ENCODE measurements at regions of chr19 and their contacts with region 1.

Region 1: DNA sequence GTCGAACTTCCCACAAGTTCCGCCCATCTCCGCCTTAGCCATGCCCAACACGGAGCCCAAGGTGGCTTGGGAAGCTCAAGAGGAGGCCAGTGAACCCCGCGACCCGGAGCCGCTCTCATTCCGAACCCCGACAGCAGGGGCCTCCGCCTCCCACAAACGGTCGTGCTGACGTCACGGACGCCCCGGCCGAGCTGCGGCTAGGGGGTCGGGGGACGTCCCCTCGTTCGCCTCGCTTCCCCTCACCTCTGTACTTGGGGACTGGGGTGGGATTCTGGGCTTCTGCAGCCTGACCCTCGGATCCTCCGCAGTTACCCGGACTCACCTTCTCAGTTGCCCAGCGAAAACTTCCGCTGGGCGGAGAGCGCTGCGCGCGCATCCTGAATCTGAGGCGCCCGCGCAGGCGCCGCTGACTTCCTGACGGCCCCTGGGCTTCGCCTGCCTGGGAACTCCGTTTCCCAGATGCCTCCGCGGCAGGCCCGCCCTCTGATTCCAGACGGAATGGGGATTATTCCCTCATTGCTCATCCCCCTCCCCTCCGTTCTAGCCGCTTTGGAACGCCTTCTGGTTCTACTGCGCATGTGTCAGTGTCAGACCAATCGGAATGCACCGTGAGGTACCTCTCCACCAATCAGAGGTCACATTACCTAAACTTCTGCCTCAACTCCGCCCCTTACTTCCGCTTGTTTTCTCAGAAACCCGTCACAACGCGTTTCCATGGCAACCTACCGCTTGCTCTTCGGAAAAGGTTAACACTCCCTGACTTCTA is at the start of gene VRK3:
- DNase-seq: peak; percentile 100
- ATAC-seq: peak; percentile 91
- H3K4me3 ChIP-seq: peak within 1 kb of the TSS; percentile 95
- H3K27ac ChIP-seq: peak within 1 kb of the TSS; percentile 62
- H3K4me1 ChIP-seq: peaks cover 41% of the 10 kb centered on the region
- H3K27me3 ChIP-seq: no peaks in the 10 kb centered on the region
- CTCF ChIP-seq: no peak
- total RNA-seq, gene VRK3: 26.0 and 36.3 TPM in 2 replicates

Region 2: DNA sequence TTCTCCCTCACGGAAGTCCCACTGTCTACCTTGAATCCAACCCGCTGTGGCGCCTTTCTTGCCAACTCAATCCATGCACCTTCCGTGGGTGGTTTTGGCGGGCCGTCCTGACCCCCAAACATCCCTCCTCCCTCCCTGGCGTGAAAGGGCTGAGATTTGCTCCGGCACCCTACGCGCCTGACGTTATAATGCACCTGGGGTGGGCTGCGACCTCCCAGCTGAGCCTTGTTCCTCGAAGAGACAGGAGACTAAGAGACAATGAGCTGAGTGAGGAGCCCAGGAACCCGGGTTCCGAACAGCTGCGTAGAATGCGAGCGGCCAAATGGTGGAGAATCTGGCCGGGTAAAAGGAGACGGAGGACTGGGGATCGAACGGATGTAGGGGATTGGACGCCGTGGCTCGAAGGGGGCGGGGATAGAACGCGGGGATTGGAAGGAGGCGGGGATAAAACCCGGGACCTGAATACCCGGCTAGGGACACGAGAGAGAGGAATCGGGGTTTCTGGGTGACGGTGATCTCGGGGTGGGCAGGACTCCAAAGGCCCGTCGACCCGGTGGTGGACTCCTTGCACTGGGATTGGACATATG is 334.5 kb before region 1 on chr19 and contains the start of gene CPT1C:
- CTCF ChIA-PET with region 1: no interaction called
- POLR2A ChIA-PET with region 1: interaction called, 17 read pairs
- intact Hi-C with region 1: no loop called
- DNase-seq: peak; percentile 90
- ATAC-seq: peak; percentile 73
- H3K4me3 ChIP-seq: peak within 1 kb of the TSS; percentile 82
- H3K27ac ChIP-seq: no peak within 1 kb of the TSS
- H3K4me1 ChIP-seq: peaks cover 19% of the 10 kb centered on the region
- H3K27me3 ChIP-seq: no peaks in the 10 kb centered on the region
- CTCF ChIP-seq: no peak
- total RNA-seq, gene CPT1C: 11.5 and 13.6 TPM in 2 replicates

Region 3: DNA sequence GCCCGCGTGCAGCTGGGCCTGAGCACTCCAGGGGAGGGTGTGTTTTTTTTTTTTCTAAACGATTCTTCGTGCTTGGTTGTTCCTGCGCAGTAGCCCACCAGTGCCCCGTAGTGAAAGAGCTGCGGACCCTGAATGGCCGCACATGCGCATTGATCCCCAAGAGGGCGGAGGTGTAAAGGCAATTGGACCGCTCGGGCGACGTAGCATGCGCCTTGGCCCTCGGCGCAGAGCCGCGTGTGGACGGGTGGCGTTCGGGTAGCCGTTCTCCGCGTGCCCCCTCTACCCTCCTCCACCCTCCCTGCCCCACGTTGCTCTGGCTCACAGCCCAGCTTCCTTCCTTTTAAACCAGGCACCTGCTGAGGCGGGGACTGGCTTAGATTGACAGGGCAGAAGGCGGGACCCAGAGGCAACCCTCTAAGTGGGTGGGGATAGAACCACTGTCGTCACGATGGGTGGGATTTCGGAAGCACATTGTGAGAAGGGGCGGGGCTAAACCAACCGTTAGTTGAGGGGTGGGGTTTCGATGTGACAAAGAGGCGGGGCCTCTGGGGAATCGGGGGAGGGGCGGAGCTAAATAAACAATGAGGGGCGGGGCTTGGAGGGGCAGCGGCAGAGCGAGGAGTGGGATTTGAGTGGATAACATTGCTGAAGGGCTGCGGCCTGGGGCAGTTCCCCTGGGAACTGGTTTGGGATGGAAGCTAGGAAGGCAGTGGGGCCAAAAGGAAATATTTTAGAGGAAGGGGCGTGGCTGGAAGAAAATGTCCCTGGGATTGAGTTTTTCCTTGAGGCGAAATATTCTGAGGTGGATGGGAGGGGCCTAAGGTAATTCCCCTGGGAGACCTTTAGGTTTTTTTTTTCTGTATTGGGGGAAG is 95.4 kb before region 1 on chr19:
- CTCF ChIA-PET with region 1: no interaction called
- POLR2A ChIA-PET with region 1: no interaction called
- intact Hi-C with region 1: loop called (anchors 10 kb)
- DNase-seq: peak; percentile 98
- ATAC-seq: peak; percentile 74
- H3K4me3 ChIP-seq: peak overlapping the region; percentile 81
- H3K27ac ChIP-seq: peak overlapping the region; percentile 92
- H3K4me1 ChIP-seq: peaks cover 59% of the 10 kb centered on the region
- H3K27me3 ChIP-seq: no peaks in the 10 kb centered on the region
- CTCF ChIP-seq: no peak

Region 4: DNA sequence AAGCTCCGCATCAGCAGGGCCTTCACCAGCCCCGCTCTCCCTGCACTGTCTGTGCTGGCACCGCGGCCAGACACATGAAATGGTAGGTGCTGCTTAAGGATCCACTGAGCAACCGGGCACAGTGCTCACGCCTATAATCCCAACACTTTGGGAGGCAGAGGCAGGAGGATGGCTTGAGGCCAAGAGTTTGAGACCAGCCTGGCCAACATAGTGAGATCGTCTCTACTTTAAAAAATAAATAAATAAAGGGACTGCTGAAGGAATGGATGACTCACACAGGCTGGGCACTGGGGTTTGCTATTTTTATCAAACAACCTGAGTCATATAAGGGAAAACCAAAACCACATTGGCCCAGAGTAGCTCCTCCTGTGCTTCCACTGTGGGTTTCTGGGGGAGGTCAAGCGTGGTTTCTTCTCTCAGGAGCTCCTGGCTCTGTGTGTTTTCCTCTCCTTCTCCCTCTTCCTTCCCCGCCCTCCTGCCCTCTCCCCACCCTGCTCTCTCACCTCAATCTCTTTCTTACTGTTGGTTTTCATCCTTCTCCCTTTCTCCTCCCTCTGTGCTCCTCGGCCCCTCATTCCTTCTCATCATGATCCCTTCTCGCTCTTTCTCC is 21.3 kb before region 1 on chr19:
- CTCF ChIA-PET with region 1: no interaction called
- POLR2A ChIA-PET with region 1: no interaction called
- intact Hi-C with region 1: loop called (anchors 1 kb)
- DNase-seq: peak; percentile 98
- ATAC-seq: peak; percentile 99
- H3K4me3 ChIP-seq: peak overlapping the region; percentile 53
- H3K27ac ChIP-seq: peak overlapping the region; percentile 97
- H3K4me1 ChIP-seq: peaks cover 22% of the 10 kb centered on the region
- H3K27me3 ChIP-seq: no peaks in the 10 kb centered on the region
- CTCF ChIP-seq: no peak

Measured in PC-3 (cell line).